Panc1 (cell line): ENCODE measurements at regions of chr12 and their contacts with region 1.

Region 1: DNA sequence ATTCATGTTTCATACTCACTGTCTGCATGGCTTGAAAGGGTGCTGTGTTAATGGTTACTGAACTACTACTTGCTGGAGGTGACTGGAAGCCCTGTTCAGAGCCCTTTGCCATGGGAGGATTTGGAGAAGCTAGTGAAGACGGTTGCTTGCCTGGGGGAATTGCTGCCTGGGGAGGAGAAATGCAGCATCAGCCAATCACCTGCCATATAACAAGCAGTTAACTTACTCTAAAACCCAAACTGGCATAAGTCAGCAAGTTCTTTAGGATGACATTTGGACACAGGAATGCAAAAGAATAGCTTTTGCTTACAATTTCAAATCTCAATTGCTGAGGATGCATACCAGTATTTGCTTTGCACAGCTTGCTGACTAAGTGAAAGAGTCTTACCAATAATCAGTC is 23.4 kb upstream of the IPO8 start:
- DNase-seq: no peak
- ATAC-seq: no peak
- H3K4me3 ChIP-seq: no peak overlapping the region
- H3K27ac ChIP-seq: no peak overlapping the region
- H3K4me1 ChIP-seq: no peaks in the 10 kb centered on the region
- H3K27me3 ChIP-seq: no peaks in the 10 kb centered on the region
- CTCF ChIP-seq: no peak

Region 2: DNA sequence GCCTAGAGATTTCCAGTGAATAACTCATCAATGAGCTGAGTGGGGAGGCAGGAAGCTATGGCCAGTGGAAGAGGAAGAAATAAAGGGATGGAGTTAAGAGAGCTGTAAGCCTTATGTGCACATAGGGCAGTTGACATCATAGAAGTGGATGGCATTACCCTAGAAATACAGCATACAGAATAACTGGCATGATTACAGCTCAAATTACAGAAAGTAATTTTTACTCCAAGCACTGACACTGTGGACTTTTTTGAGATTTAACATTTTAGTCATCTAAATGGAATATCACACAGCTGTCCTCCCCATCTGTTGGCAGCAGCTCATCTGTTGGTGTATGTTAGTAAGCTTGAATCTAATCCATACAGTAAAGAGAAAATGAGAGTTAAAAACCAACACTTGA is 18.0 kb before region 1 on chr12:
- CTCF ChIA-PET with region 1: no interaction called
- POLR2A ChIA-PET with region 1: interaction called, 13 read pairs
- in situ Hi-C with region 1: no loop called
- intact Hi-C with region 1: no loop called
- DNase-seq: no peak
- ATAC-seq: no peak
- H3K4me3 ChIP-seq: no peak overlapping the region
- H3K27ac ChIP-seq: no peak overlapping the region
- H3K4me1 ChIP-seq: peaks cover 2% of the 10 kb centered on the region; the same call in 1 of the 2 replicates
- H3K27me3 ChIP-seq: no peaks in the 10 kb centered on the region
- CTCF ChIP-seq: no peak

Region 3: GRCh38 chr12:30732954-30733637 is 14.0 kb after region 1 on chr12:
- CTCF ChIA-PET with region 1: no interaction called
- POLR2A ChIA-PET with region 1: no interaction called
- in situ Hi-C with region 1: no loop called
- intact Hi-C with region 1: no loop called
- DNase-seq: no peak
- ATAC-seq: no peak
- H3K4me3 ChIP-seq: no peak overlapping the region
- H3K27ac ChIP-seq: no peak overlapping the region
- H3K4me1 ChIP-seq: no peaks in the 10 kb centered on the region
- H3K27me3 ChIP-seq: no peaks in the 10 kb centered on the region
- CTCF ChIP-seq: no peak

Region 4: GRCh38 chr12:30965613-30965985 is 246.5 kb after region 1 on chr12:
- CTCF ChIA-PET with region 1: no interaction called
- POLR2A ChIA-PET with region 1: no interaction called
- in situ Hi-C with region 1: no loop called
- intact Hi-C with region 1: no loop called
- DNase-seq: no peak
- ATAC-seq: peak; percentile 59
- H3K4me3 ChIP-seq: no peak overlapping the region
- H3K27ac ChIP-seq: no peak overlapping the region
- H3K4me1 ChIP-seq: no peaks in the 10 kb centered on the region
- H3K27me3 ChIP-seq: peaks cover 35% of the 10 kb centered on the region
- CTCF ChIP-seq: no peak; the same call in 1 of the 2 replicates